Activated naive CD4-positive, alpha-beta T cell treated with anti-CD3 and anti-CD28 coated beads for 36 hours (primary cell): ENCODE measurements at regions of chr2 and their contacts with region 1.

Region 1: DNA sequence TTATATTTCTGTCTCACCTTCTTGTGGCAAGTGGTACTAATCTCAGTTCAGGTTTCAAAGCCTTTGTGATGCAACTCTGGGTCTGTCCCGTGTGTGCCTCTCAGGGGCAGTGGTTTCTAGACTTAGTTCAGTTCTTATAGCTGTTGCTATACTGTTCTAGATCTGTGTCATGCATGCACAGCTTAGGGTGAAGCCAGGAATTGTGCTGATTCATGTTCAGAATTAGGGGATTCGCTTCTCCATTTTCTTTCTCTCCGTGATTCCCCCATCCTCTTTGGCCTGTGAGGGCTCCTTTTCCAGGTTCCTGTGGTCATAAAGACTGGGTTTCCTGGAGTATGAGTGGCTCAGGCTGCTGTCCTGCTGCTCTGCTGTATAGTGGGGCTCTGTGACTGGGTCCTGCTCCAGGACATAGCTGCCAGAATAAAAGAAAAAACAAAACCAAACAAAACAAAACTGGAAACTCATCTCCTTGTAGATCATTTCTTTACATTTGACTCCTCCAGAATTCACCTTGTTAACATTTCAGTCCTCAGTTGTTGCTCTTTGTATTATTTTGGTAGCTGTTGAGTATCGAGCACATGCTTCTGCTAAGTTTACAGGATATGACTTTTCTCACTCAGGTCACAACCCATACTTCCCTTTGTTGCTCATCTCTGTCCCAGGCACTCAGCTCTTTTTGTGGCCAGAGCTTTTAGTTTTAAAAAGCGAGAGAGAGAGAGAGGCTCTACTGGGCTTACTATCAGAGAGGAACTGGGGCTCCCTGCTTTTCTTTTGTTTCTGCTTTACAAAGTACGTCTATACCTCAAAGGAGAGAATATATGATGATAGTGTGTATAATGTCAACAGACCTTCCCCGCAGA is 34.2 kb downstream of the CERS6 start:
- DNase-seq: peak; percentile 82
- H3K4me3 Mint-ChIP-seq: peak overlapping the region; percentile 57
- H3K27ac Mint-ChIP-seq: peak overlapping the region; percentile 90
- H3K4me1 Mint-ChIP-seq: peaks cover 48% of the 10 kb centered on the region
- H3K27me3 Mint-ChIP-seq: no peaks in the 10 kb centered on the region

Region 2: GRCh38 chr2:167862787-167863186 is 627.5 kb before region 1 on chr2:
- CTCF ChIA-PET with region 1: no interaction called
- intact Hi-C with region 1: loop called (anchors 5 kb)
- DNase-seq: peak; percentile 30
- H3K4me3 Mint-ChIP-seq: no peak overlapping the region
- H3K27ac Mint-ChIP-seq: peak overlapping the region; percentile 39
- H3K4me1 Mint-ChIP-seq: peaks cover 15% of the 10 kb centered on the region
- H3K27me3 Mint-ChIP-seq: peaks cover 8% of the 10 kb centered on the region

Region 3: GRCh38 chr2:167943897-167944296 is 546.3 kb before region 1 on chr2:
- CTCF ChIA-PET with region 1: no interaction called
- intact Hi-C with region 1: no loop called
- DNase-seq: no peak
- H3K4me3 Mint-ChIP-seq: no peak overlapping the region
- H3K27ac Mint-ChIP-seq: no peak overlapping the region
- H3K4me1 Mint-ChIP-seq: no peaks in the 10 kb centered on the region
- H3K27me3 Mint-ChIP-seq: peaks cover 11% of the 10 kb centered on the region

Region 4: DNA sequence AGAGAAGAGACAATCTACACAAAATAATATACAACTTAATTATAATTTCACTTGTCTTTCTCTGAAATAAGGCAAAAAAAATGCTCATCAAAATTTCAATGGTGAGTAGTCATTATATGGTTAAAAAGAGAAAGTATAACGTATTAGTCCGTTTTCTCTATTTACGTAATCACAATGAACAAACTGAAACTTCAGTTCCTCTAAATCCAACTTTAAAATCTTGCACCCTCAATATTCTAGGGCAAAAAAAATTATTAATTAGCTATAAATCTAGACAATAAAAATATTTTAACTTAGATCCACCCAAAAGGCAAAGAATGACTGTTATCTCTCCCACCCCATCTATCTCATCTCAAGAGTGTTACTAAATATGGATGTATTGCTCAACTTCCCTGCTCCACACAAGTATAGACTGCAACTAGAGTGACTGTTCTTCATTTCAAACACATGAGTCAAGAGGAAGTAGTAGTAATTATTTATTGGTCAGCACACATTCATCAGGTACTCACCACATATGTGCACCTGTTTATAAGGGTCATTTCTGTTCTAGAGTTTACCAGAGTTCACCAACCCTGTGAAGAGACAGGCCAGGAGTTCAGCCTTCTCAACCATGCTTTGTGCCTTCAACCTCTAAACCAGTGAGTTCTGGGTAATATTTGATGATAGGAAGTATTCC is 279.2 kb before region 1 on chr2:
- CTCF ChIA-PET with region 1: no interaction called
- intact Hi-C with region 1: loop called (anchors 1 kb)
- DNase-seq: no peak
- H3K4me3 Mint-ChIP-seq: peak overlapping the region; percentile 6
- H3K27ac Mint-ChIP-seq: peak overlapping the region; percentile 98
- H3K4me1 Mint-ChIP-seq: peaks cover 63% of the 10 kb centered on the region
- H3K27me3 Mint-ChIP-seq: no peaks in the 10 kb centered on the region

Region 5: DNA sequence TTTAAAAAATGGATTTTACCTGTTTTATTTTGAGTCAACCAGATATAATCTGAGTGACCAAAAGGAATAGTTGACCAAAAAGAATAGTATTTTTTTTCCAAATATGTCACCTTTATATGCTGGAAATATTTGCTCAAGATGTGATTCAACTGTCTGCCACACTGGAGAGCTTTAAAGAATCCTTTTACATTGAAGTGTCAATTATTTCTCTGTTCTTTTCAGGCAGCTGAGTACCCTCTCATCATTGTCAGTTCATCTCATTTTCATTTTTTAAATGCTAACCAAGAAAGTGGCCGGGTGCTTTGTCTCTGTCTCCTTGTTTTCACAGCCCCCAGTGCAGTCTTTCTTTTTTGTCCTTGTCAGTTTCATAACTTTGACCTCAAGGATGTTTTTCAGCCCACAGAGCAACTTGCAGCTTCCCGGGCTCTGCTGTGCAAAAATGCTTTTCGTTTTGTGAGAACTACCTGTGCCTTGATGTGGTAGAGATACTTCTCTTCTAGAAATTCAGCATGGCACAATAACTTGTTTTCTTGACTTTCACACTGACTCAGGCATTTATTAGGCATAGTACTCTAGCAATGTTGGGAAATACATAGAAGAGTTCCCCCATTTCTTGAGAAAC is 57.6 kb before region 1 on chr2:
- CTCF ChIA-PET with region 1: interaction called, 3 read pairs
- intact Hi-C with region 1: loop called (anchors 1 kb)
- DNase-seq: peak; percentile 46
- H3K4me3 Mint-ChIP-seq: no peak overlapping the region
- H3K27ac Mint-ChIP-seq: peak overlapping the region; percentile 25
- H3K4me1 Mint-ChIP-seq: peaks cover 42% of the 10 kb centered on the region
- H3K27me3 Mint-ChIP-seq: no peaks in the 10 kb centered on the region

Region 6: DNA sequence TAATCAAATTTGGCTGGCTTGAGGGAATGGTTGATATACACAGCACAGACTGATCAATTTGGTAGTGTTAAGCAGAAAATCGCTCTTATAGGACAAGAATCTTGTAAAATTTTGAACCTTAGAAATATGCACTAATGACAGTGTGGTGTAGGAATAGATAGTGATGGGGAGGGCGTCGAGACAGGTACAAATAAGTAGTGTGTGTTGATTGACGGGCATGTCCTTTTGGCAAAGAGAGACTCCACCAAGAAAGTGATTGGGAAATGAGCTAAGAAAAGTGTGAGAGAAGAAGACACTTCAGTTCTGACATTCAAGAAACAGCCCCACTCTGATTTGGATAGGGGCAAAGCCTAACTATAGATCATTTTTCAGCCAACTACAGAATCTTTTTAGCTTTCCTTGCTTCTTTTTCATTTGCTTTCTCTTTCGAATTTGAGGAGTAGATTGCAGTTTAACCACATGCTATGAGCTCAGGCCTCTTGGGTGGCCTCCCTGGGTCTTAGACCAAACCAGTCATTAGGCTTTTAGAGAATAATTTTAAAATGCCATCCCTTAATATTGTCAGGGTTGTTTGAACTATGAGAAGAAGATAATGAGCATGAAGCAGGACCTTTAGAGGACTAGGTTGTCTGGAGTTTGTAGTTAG is 92.9 kb after region 1 on chr2:
- CTCF ChIA-PET with region 1: interaction called, 4 read pairs
- intact Hi-C with region 1: loop called (anchors 1 kb)
- DNase-seq: peak; percentile 20
- H3K4me3 Mint-ChIP-seq: no peak overlapping the region
- H3K27ac Mint-ChIP-seq: peak overlapping the region; percentile 20
- H3K4me1 Mint-ChIP-seq: peaks cover 62% of the 10 kb centered on the region
- H3K27me3 Mint-ChIP-seq: no peaks in the 10 kb centered on the region

Region 7: GRCh38 chr2:168614172-168615018 is 124.2 kb after region 1 on chr2:
- CTCF ChIA-PET with region 1: no interaction called
- intact Hi-C with region 1: no loop called
- DNase-seq: peak; percentile 27
- H3K4me3 Mint-ChIP-seq: no peak overlapping the region
- H3K27ac Mint-ChIP-seq: no peak overlapping the region
- H3K4me1 Mint-ChIP-seq: peaks cover 18% of the 10 kb centered on the region
- H3K27me3 Mint-ChIP-seq: no peaks in the 10 kb centered on the region

Region 8: DNA sequence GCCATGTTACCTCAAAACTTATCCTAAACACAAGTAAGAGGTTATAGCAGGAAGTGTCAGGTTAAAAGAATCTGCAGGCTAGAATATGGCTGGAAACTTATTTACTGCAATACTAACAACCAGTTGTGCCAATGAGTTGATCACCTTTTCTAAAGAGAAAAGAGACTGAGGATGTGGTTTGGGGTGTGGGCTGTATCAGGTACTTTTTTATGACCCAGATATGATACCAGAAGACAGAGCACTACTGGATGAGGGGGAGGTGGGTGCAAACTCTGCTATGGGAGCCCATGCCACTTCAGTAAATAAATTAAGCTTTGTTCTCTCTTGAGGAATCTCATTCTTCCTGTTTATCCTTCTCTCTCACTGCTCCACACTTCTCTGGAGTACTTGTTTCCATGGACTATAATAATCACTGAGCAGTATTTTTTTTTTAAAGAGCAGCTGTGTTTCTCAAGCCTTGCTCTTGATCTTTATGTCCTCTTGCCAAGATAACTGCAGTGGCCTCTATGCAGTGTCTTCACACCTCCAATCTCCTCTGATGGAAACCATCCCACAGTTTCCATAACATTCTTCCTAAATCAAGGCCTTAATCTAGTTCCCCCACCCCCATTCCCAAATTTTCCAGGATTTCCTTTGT is 261.0 kb after region 1 on chr2:
- CTCF ChIA-PET with region 1: no interaction called
- intact Hi-C with region 1: loop called (anchors 1 kb)
- DNase-seq: peak; percentile 59
- H3K4me3 Mint-ChIP-seq: no peak overlapping the region
- H3K27ac Mint-ChIP-seq: no peak overlapping the region
- H3K4me1 Mint-ChIP-seq: peaks cover 70% of the 10 kb centered on the region
- H3K27me3 Mint-ChIP-seq: no peaks in the 10 kb centered on the region